Ascending aorta (tissue), 2 donors: ENCODE measurements at regions of chr20 and their contacts with region 1.

Region 1: DNA sequence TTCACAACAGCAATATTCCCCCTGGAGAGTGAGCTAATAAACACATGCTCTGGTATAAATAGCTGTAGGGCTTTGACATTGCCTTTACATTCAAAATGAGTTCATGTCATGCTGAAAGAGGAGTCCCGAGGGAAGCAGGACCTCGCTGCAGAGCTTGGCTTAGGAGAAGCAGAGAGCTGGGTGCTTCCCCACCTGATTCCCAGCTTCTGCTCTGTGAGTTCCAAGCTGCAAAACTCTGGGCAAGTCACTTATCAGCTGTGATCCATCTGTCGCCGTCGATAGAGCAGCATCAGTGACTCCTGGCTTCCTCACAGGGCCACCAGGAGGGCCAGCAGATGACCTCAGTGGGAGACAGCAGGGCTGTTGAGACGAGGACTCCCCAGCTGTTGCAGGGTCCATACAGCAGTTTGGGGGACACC is 241.8 kb downstream of the ANKRD60 start:
- DNase-seq: no peak
- H3K4me3 ChIP-seq: no peak overlapping the region
- H3K27ac ChIP-seq: no peak overlapping the region
- H3K4me1 ChIP-seq: peaks cover 0 to 7% of the 10 kb centered on the region in 2 donors
- H3K27me3 ChIP-seq: no peaks in the 10 kb centered on the region
- CTCF ChIP-seq: no peak

Region 2: GRCh38 chr20:58008866-58009265 is 22.2 kb after region 1 on chr20:
- intact Hi-C with region 1: loop called (anchors 1 kb)
- DNase-seq: no peak
- H3K4me3 ChIP-seq: no peak overlapping the region
- H3K27ac ChIP-seq: no peak overlapping the region
- H3K4me1 ChIP-seq: peaks cover 0 to 6% of the 10 kb centered on the region in 2 donors
- H3K27me3 ChIP-seq: no peaks in the 10 kb centered on the region
- CTCF ChIP-seq: no peak